ENCODE measurements at regions of chr19 and their contacts with region 1.

Region 1: DNA sequence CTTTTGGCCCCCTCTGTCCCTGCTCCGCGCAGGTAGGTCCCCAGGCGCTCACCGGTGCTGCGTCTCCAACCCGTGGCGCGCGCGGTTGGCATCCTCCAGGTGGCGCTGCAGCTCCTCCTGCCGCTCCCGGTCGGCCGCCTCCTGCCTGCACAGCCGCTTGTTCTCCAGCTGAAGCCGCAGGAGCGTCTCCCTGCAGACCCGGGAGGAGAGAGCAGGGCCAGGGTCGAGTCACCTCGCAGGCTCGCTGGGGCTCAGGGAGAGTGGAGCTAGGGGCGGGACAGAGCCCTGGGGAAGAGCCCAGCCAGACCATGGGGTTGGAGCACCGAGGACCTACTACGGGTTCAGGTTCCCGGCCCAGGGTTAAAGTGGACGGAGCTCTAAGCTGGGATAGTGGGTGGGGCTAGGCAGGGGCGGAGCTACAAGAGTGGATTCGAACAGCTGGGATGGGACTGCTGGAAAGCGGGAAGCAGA is 9.3 kb downstream of the HOOK2 start:
- DNase-seq: peak; percentile 90
- ATAC-seq: peak; percentile 83
- H3K4me3 Mint-ChIP-seq: peak overlapping the region; percentile 43
- H3K27ac Mint-ChIP-seq: no peak overlapping the region
- H3K4me1 Mint-ChIP-seq: peaks cover 2% of the 10 kb centered on the region
- H3K27me3 Mint-ChIP-seq: no peaks in the 10 kb centered on the region

Region 2: DNA sequence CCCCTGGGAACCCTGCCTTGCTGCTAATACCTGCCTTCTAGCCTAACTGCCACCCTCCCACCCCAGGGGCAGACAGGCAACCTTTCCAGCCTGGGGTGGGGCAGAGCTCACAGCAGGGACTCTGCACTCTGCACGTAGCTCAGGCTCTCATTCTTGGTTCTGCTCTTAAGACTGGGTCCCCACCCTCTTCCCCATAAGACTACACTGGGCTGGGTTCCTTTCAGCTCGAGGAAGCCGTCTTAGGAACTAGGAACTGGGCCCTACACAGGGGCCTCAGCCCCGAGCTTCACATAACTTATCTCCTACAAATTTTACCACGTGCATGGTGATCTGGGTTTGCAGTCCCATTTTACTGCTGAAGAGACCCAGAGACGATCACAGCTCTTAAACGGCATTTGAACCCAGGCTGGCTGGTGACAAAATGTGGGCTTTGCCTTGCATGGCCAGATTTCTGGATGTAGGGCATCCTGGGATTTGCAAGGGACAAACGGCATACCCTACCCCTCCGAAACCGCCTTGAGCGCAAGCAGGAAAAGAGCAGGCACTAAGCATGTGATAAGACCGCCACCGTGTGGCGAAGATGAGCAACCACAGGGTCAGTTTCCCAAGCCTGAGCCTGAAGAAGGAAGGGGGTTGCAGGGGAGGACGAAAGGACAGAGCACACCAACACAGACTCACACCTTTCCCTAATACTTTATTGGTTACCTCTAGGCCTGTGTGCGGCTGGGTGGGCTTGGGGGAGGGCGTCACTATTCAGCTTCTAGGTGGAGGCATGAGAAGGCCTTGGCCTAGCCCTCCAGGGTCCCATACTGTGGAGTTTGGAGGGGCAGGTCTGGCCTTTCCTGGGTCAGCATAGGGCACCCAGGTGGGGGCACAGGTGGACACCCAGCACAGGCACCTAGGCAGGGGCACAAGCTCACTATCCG is 30.3 kb after region 1 on chr19:
- POLR2A ChIA-PET with region 1: interaction called, 30 read pairs
- DNase-seq: peak; percentile 80
- ATAC-seq: no peak
- H3K4me3 Mint-ChIP-seq: peak overlapping the region; percentile 79
- H3K27ac Mint-ChIP-seq: peak overlapping the region; percentile 82
- H3K4me1 Mint-ChIP-seq: peaks cover 28% of the 10 kb centered on the region
- H3K27me3 Mint-ChIP-seq: no peaks in the 10 kb centered on the region

Measured in activated naive CD8-positive, alpha-beta T cell treated with anti-CD3 and anti-CD28 coated beads, Interleukin-2, amount 10 ng/mL, durations not matched to agents 7 days and 5 days (primary cell).